ENCODE measurements at regions of chrX and their contacts with region 1.

Region 1: DNA sequence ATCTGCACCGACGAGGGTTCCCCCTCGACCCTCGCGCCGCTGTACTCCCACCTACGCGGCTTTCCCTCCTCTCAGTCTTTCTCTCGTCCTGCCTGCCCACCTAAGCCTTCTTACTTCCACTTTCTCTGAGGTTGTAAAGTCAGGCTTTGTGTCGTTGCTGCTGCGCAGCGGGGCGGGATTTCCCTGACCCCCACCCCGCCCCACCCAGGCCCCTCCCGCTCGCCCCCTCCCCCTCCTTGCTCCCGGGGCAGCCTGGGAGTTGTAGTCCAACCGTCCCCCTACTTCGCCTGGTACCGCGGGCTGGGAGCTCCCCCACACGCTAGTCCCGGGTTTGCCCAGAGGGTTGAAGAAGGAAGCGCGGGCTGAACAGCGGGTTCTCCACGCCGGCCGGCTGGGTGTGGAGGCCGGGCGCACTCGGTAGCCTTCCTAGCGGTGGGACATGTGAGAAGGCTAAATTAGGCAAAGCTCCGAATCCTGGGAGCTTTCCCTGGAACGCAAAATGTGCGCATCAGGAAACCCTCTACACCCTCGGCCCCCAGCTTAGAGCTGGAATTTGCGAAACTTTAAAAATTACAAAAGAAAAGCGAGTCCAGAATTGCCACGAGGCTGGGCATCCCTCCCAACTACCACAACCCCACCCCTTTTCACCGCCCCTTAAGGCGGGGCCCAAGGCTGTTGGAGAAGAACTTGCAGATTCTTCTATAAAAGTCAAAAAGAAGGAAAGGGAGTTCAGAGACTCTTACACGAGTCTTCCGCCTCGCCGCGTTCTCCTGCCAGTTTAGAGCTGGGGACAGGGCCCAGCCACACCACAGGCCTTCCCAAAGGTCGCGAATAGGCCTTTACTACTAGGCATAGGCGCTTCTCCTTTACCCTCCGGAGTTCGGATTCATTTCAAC is at the start of gene ATP11C:
- DNase-seq: peak; percentile 88
- H3K4me3 Mint-ChIP-seq: peak within 1 kb of the TSS; percentile 79
- H3K27ac Mint-ChIP-seq: peak within 1 kb of the TSS; percentile 86
- H3K4me1 Mint-ChIP-seq: peaks cover 16% of the 10 kb centered on the region
- H3K27me3 Mint-ChIP-seq: no peaks in the 10 kb centered on the region
- total RNA-seq, gene ATP11C: 10.9 to 11.5 TPM

Region 2: GRCh38 chrX:139739138-139739537 is 194.0 kb before region 1 on chrX:
- CTCF ChIA-PET with region 1: no interaction called
- POLR2A ChIA-PET with region 1: interaction called, 3 read pairs
- intact Hi-C with region 1: loop called (anchors 1 kb)
- DNase-seq: peak; percentile 29
- H3K4me3 Mint-ChIP-seq: no peak overlapping the region
- H3K27ac Mint-ChIP-seq: peak overlapping the region; percentile 49
- H3K4me1 Mint-ChIP-seq: peaks cover 6% of the 10 kb centered on the region
- H3K27me3 Mint-ChIP-seq: no peaks in the 10 kb centered on the region

Region 3: DNA sequence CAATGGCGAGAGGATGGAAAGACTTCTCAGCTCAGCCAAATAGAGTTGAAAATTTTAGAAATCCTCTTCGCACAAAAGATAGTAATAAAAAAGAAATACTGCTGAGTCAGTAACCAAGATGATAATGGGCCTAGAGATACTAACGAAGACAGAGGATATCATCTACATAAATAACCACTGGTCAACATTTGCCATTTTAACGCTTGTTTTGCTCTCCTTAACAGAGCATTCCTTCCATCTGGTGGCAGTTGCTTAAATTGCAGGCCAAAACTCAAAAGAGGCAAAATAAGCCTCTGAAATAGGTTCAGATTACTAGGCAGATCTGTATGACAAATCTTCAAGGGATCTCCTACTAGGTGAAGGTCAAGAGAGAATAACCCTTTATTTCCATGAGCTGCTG is 173.5 kb before region 1 on chrX:
- CTCF ChIA-PET with region 1: no interaction called
- POLR2A ChIA-PET with region 1: no interaction called
- intact Hi-C with region 1: loop called (anchors 10 kb)
- DNase-seq: no peak
- H3K4me3 Mint-ChIP-seq: no peak overlapping the region
- H3K27ac Mint-ChIP-seq: no peak overlapping the region
- H3K4me1 Mint-ChIP-seq: no peaks in the 10 kb centered on the region
- H3K27me3 Mint-ChIP-seq: no peaks in the 10 kb centered on the region

Region 4: DNA sequence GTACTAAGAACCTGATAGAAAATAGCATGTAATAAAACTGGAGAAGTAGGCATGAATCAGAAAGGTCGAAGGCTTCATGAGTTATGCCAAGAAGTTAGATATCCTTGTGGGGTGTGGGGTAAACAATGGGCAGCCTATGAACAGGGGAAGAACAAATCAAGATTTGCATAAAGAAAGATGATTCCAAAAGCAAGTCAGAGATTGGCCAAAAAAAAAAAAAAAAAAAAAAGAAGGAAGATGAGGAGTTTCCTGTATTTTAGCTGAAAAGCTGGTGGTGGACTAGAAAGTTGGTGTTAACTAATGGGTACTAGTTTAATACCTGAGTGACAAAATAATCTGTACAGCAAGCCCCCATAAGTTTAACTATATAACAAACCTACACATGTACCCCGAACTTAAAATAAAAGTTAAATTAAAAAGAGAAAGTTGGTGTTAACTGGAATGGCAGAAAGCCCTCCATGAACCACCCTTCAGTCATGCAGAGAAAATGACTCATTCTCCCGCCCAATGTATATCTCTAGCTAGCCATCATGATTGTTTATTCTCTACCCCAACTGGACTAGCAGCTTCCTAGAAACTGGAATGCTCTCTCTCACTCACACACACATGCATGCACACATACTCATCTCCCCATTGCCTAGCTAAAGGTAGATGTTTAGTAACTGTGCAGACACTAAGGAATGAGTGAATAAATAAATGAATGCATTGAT is 42.0 kb before region 1 on chrX:
- CTCF ChIA-PET with region 1: no interaction called
- POLR2A ChIA-PET with region 1: no interaction called
- intact Hi-C with region 1: loop called (anchors 5 kb)
- DNase-seq: no peak
- H3K4me3 Mint-ChIP-seq: no peak overlapping the region
- H3K27ac Mint-ChIP-seq: no peak overlapping the region
- H3K4me1 Mint-ChIP-seq: peaks cover 26% of the 10 kb centered on the region
- H3K27me3 Mint-ChIP-seq: no peaks in the 10 kb centered on the region

Region 5: GRCh38 chrX:139909712-139910111 is 23.4 kb before region 1 on chrX:
- CTCF ChIA-PET with region 1: no interaction called
- POLR2A ChIA-PET with region 1: interaction called, 3 read pairs
- intact Hi-C with region 1: loop called (anchors 1 kb)
- DNase-seq: no peak
- H3K4me3 Mint-ChIP-seq: no peak overlapping the region
- H3K27ac Mint-ChIP-seq: no peak overlapping the region
- H3K4me1 Mint-ChIP-seq: peaks cover 21% of the 10 kb centered on the region
- H3K27me3 Mint-ChIP-seq: no peaks in the 10 kb centered on the region

Region 6: DNA sequence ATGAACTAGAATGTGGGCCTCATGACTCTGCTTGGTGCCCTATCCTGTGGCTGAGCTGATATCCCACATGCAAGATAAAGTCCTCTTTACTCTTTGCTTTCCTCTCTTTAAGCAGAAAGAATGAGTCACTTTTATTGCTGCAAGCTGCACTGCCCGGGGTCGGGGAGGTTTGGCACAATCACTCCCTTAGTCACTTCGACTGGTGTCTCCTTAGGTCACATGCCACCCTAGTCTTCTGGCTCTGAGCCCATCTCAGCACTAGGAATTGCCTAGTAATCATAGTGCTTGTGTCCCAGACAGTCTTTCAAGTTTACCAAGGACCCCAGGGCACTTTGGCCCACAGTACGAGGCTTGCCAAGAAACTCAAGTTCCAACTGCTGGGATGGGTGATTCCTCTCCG is 107.3 kb after region 1 on chrX:
- CTCF ChIA-PET with region 1: no interaction called
- POLR2A ChIA-PET with region 1: no interaction called
- intact Hi-C with region 1: no loop called
- DNase-seq: no peak
- H3K4me3 Mint-ChIP-seq: no peak overlapping the region
- H3K27ac Mint-ChIP-seq: no peak overlapping the region
- H3K4me1 Mint-ChIP-seq: no peaks in the 10 kb centered on the region
- H3K27me3 Mint-ChIP-seq: peaks cover 2% of the 10 kb centered on the region